ENCODE measurements at regions of chr1 and their contacts with region 1.

Region 1: DNA sequence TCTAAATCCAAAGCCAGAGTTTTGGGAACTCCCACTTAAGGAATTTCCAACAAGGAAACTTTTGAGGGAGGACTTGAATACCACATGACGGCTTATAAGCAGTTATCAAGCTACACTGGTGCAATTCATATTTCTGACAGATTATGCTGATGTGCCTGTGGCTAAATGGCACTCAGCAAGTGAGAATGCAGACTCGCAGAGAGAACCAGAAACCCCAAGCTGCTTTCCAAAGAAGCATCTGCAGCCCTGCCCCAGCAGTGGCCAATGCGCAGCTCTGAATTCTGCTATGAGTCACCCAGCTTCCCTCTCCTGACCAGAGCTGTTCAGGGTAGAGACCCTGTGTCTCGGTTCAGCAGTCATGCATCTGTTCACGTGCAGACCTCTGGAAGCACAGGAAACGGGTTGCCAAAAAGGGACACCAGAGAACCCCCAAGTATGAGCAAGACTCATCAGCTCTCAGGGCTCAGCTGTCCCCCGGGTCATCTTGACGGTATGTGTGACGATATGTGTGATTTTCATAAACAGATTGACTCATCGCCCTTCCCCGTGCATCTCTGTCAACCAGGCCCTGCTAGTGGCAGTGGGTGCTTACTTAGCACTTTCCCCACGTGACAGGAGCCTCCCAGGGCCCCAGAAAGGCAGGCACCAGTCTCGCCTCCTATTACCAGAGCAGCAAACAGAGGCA is 76.3 kb downstream of the ITPKB start:
- DNase-seq: peak; percentile 82 to 92
- H3K4me3 ChIP-seq: peak overlapping the region; percentile 38; the same call in 1 of the 2 replicates
- H3K27ac ChIP-seq: peak overlapping the region; percentile 59
- H3K4me1 ChIP-seq: peaks cover 42% of the 10 kb centered on the region
- H3K27me3 ChIP-seq: no peaks in the 10 kb centered on the region
- CTCF ChIP-seq: no peak

Region 2: GRCh38 chr1:226679853-226680516 is 17.2 kb after region 1 on chr1:
- CTCF ChIA-PET with region 1: no interaction called
- POLR2A ChIA-PET with region 1: no interaction called
- intact Hi-C with region 1: loop called (anchors 2 kb)
- DNase-seq: peak in 1 of 2 experiments; percentile 61
- H3K4me3 ChIP-seq: no peak overlapping the region
- H3K27ac ChIP-seq: no peak overlapping the region
- H3K4me1 ChIP-seq: no peaks in the 10 kb centered on the region
- H3K27me3 ChIP-seq: no peaks in the 10 kb centered on the region
- CTCF ChIP-seq: no peak

Region 3: DNA sequence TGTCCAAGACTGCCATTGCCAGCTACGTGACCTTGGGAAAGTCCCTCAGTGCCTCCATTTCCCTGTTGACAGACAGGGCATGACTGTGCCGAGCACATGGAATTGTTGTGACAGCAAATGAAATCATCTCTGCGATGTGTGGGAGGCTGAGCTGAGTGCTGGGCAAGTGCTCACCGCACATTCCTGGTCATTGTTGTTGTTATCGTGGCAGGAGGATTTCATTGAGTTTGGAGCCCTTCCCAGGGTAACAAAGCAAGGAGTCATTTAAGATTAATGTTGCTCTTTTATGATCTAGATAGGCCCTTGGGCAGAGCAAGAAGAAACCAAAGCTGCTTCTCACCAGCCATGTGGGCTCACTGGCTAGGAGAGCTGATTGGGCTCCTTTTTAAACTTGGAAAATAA is 115.9 kb after region 1 on chr1:
- CTCF ChIA-PET with region 1: no interaction called
- POLR2A ChIA-PET with region 1: interaction called, 12 read pairs
- intact Hi-C with region 1: no loop called
- DNase-seq: peak in 1 of 2 experiments; percentile 46
- H3K4me3 ChIP-seq: no peak overlapping the region
- H3K27ac ChIP-seq: no peak overlapping the region
- H3K4me1 ChIP-seq: no peaks in the 10 kb centered on the region
- H3K27me3 ChIP-seq: no peaks in the 10 kb centered on the region
- CTCF ChIP-seq: no peak

Region 4: GRCh38 chr1:226814751-226815496 is 152.1 kb after region 1 on chr1:
- CTCF ChIA-PET with region 1: no interaction called
- POLR2A ChIA-PET with region 1: interaction called, 4 read pairs
- intact Hi-C with region 1: loop called (anchors 1 kb)
- DNase-seq: peak; percentile 98 to 99
- H3K4me3 ChIP-seq: peak overlapping the region; percentile 25; the same call in 1 of the 2 replicates
- H3K27ac ChIP-seq: peak overlapping the region; percentile 97
- H3K4me1 ChIP-seq: peaks cover 56% of the 10 kb centered on the region
- H3K27me3 ChIP-seq: no peaks in the 10 kb centered on the region
- CTCF ChIP-seq: no peak

Measured in PC-9 (cell line).